Calu3 (cell line): ENCODE measurements at regions of chr11 and their contacts with region 1.

Region 1: GRCh38 chr11:111359223-111360149 is 19.6 kb downstream of the POU2AF1 start:
- DNase-seq: no peak
- H3K4me3 Mint-ChIP-seq: no peak overlapping the region
- H3K27ac Mint-ChIP-seq: no peak overlapping the region
- H3K4me1 Mint-ChIP-seq: peaks cover 28% of the 10 kb centered on the region
- H3K27me3 Mint-ChIP-seq: no peaks in the 10 kb centered on the region
- CTCF ChIP-seq: no peak

Region 2: GRCh38 chr11:111299101-111300026 is 60.1 kb before region 1 on chr11:
- CTCF ChIA-PET with region 1: no interaction called
- intact Hi-C with region 1: loop called (anchors 2 kb)
- DNase-seq: peak; percentile 76
- H3K4me3 Mint-ChIP-seq: peak overlapping the region; percentile 66
- H3K27ac Mint-ChIP-seq: no peak overlapping the region
- H3K4me1 Mint-ChIP-seq: peaks cover 9% of the 10 kb centered on the region
- H3K27me3 Mint-ChIP-seq: no peaks in the 10 kb centered on the region
- CTCF ChIP-seq: peak; percentile 54

Region 3: GRCh38 chr11:111526501-111526900 is 167.0 kb after region 1 on chr11:
- CTCF ChIA-PET with region 1: no interaction called
- intact Hi-C with region 1: no loop called
- DNase-seq: no peak
- H3K4me3 Mint-ChIP-seq: no peak overlapping the region
- H3K27ac Mint-ChIP-seq: no peak overlapping the region
- H3K4me1 Mint-ChIP-seq: peaks cover 22% of the 10 kb centered on the region
- H3K27me3 Mint-ChIP-seq: no peaks in the 10 kb centered on the region
- CTCF ChIP-seq: no peak

Region 4: GRCh38 chr11:112605093-112605666 is 1245.7 kb after region 1 on chr11:
- CTCF ChIA-PET with region 1: no interaction called
- intact Hi-C with region 1: no loop called
- DNase-seq: no peak
- H3K4me3 Mint-ChIP-seq: no peak overlapping the region
- H3K27ac Mint-ChIP-seq: peak overlapping the region; percentile 50
- H3K4me1 Mint-ChIP-seq: peaks cover 21% of the 10 kb centered on the region
- H3K27me3 Mint-ChIP-seq: no peaks in the 10 kb centered on the region
- CTCF ChIP-seq: no peak